HEK293 (cell line): ENCODE measurements at regions of chr22 and their contacts with region 1.

Region 1: DNA sequence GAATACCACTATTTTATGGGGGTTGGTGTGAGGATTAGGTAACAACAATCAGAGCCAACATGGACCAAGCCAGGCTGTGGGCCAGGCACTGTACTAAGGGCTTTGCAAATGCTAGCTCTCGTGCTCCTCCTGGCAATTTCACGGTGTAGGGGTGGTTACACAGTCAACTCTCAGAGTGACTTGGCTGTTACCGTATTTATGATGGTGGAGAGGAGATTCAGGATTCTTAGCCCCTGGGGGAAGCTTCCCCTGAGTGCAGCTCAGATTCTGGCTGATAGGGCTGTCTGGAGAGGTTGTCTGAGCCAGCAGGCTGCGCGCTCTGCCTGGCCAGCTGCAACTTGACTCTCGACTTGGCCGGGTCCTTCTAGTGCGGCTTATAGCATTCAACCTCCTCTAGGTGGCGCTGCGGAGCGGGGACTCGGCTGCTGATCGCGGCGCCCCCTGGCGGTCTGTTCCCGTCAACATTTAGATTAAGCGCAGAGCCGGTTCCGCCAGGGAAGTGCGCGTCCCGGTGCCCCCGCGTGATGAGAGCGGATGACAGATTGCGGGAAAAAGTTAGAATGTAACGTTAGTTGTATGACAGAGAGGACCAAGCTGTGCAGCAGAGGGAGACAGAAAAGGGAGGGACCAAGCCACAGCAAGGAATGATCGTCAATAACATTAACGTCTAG is 4.5 kb upstream of the NCF4 start:
- H3K4me3 ChIP-seq: no peak overlapping the region
- H3K27ac ChIP-seq: no peak overlapping the region
- H3K4me1 ChIP-seq: 0 out of 2 replicates have a peak, but pooled peaks cover 3% of the 10 kb centered on the region
- CTCF ChIP-seq: peak; percentile 100

Region 2: GRCh38 chr22:36311386-36312358 is 544.6 kb before region 1 on chr22:
- CTCF ChIA-PET with region 1: no interaction called
- POLR2A ChIA-PET with region 1: no interaction called
- H3K4me3 ChIP-seq: no peak overlapping the region
- H3K27ac ChIP-seq: no peak overlapping the region
- H3K4me1 ChIP-seq: no peaks in the 10 kb centered on the region
- CTCF ChIP-seq: no peak

Region 3: GRCh38 chr22:36536717-36537116 is 319.5 kb before region 1 on chr22:
- CTCF ChIA-PET with region 1: interaction called, 29 read pairs
- POLR2A ChIA-PET with region 1: no interaction called
- H3K4me3 ChIP-seq: no peak overlapping the region
- H3K27ac ChIP-seq: no peak overlapping the region
- H3K4me1 ChIP-seq: no peaks in the 10 kb centered on the region
- CTCF ChIP-seq: no peak

Region 4: GRCh38 chr22:36757668-36758211 is 98.5 kb before region 1 on chr22:
- CTCF ChIA-PET with region 1: interaction called, 19 read pairs
- POLR2A ChIA-PET with region 1: no interaction called
- H3K4me3 ChIP-seq: no peak overlapping the region
- H3K27ac ChIP-seq: no peak overlapping the region
- H3K4me1 ChIP-seq: no peaks in the 10 kb centered on the region
- CTCF ChIP-seq: peak; percentile 78

Region 5: GRCh38 chr22:36781656-36782627 is 74.3 kb before region 1 on chr22:
- CTCF ChIA-PET with region 1: interaction called, 161 read pairs
- POLR2A ChIA-PET with region 1: interaction called, 4 read pairs
- H3K4me3 ChIP-seq: no peak overlapping the region
- H3K27ac ChIP-seq: no peak overlapping the region
- H3K4me1 ChIP-seq: peaks cover 2% of the 10 kb centered on the region; the same call in 1 of the 2 replicates
- CTCF ChIP-seq: peak; percentile 81

Region 6: DNA sequence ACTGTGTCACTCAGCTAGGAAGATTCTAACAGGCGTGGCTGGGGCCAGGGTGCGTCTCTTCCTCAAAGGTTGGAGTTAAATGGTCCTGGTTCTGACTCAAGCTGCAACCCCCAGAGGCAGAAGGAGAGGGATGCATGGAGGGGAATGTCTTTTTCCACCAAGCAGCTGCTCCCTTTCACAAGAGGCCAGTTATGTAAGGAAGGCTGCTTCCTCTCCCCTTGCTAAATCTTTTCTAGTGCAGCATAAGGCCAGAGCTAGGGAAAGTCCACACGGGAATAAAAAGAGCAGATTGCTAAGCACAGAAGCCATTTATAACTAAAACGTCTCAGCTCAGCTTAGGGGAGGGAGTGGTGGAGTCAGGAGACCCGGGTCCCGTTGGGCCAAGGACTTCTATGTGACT is 49.4 kb before region 1 on chr22:
- CTCF ChIA-PET with region 1: interaction called, 16 read pairs
- POLR2A ChIA-PET with region 1: interaction called, 7 read pairs
- H3K4me3 ChIP-seq: no peak overlapping the region
- H3K27ac ChIP-seq: no peak overlapping the region
- H3K4me1 ChIP-seq: no peaks in the 10 kb centered on the region
- CTCF ChIP-seq: no peak

Region 7: GRCh38 chr22:36839356-36840073 is 16.7 kb before region 1 on chr22:
- CTCF ChIA-PET with region 1: interaction called, 92 read pairs
- POLR2A ChIA-PET with region 1: no interaction called
- H3K4me3 ChIP-seq: no peak overlapping the region
- H3K27ac ChIP-seq: no peak overlapping the region
- H3K4me1 ChIP-seq: no peaks in the 10 kb centered on the region
- CTCF ChIP-seq: no peak

Region 8: DNA sequence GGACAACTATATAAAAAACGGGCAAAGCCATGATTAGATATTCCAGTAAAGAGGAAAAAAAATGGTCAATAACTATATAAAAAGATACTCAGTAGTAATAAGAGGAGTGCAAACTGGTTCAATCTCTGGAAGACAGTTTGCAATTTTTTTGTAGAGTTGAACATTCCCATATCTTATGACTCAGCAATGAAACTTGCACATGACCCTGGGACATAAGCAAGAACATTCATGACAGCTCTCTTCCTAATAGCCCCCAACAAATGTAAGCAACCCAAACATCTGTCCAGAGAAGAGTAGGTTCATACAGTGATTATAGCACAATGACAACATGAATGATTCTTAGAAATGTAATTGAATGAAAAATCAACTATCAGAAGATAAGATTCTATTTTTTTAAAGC is 35.4 kb after region 1 on chr22:
- CTCF ChIA-PET with region 1: interaction called, 14 read pairs
- POLR2A ChIA-PET with region 1: no interaction called
- H3K4me3 ChIP-seq: no peak overlapping the region
- H3K27ac ChIP-seq: no peak overlapping the region
- H3K4me1 ChIP-seq: no peaks in the 10 kb centered on the region
- CTCF ChIP-seq: no peak

Region 9: GRCh38 chr22:36999463-36999862 is 143.2 kb after region 1 on chr22:
- CTCF ChIA-PET with region 1: no interaction called
- POLR2A ChIA-PET with region 1: no interaction called
- H3K4me3 ChIP-seq: no peak overlapping the region
- H3K27ac ChIP-seq: no peak overlapping the region
- H3K4me1 ChIP-seq: no peaks in the 10 kb centered on the region; the same call in 1 of the 2 replicates
- CTCF ChIP-seq: no peak